Thyroid gland (tissue), 4 donors: ENCODE measurements at regions of chr17 and their contacts with region 1.

Region 1: GRCh38 chr17:8745586-8746500 is 1.2 kb upstream of the CCDC42 start:
- DNase-seq: peak; percentile 57 to 61
- H3K4me3 ChIP-seq: peak overlapping the region in 2 of 3 donors; percentile 23 to 47
- H3K27ac ChIP-seq: peak overlapping the region in 1 of 3 donors; percentile 31
- H3K4me1 ChIP-seq: peaks cover 5 to 6% of the 10 kb centered on the region in 2 donors
- H3K27me3 ChIP-seq: no peaks in the 10 kb centered on the region
- CTCF ChIP-seq: peak; percentile 58 to 96 (median 86)
- POLR2A ChIP-seq: no peak

Region 2: GRCh38 chr17:8409966-8410864 is 335.6 kb before region 1 on chr17:
- intact Hi-C with region 1: loop called (anchors 5 kb)
- DNase-seq: peak; percentile 86 to 91
- H3K4me3 ChIP-seq: no peak overlapping the region
- H3K27ac ChIP-seq: no peak overlapping the region
- H3K4me1 ChIP-seq: peaks cover 6 to 11% of the 10 kb centered on the region in 2 donors
- H3K27me3 ChIP-seq: no peaks in the 10 kb centered on the region
- CTCF ChIP-seq: peak; percentile 73 to 87 (median 82)
- POLR2A ChIP-seq: no peak

Region 3: GRCh38 chr17:8572764-8573163 is 173.1 kb before region 1 on chr17:
- intact Hi-C with region 1: loop called (anchors 10 kb)
- DNase-seq: no peak
- H3K4me3 ChIP-seq: no peak overlapping the region
- H3K27ac ChIP-seq: no peak overlapping the region
- H3K4me1 ChIP-seq: no peaks in the 10 kb centered on the region
- H3K27me3 ChIP-seq: no peaks in the 10 kb centered on the region
- CTCF ChIP-seq: peak in 3 of 6 experiments; percentile 26 to 36 (median 35)
- POLR2A ChIP-seq: no peak

Region 4: GRCh38 chr17:8673612-8674011 is 72.2 kb before region 1 on chr17:
- intact Hi-C with region 1: no loop called
- DNase-seq: no peak
- H3K4me3 ChIP-seq: no peak overlapping the region
- H3K27ac ChIP-seq: no peak overlapping the region
- H3K4me1 ChIP-seq: no peaks in the 10 kb centered on the region
- H3K27me3 ChIP-seq: no peaks in the 10 kb centered on the region
- CTCF ChIP-seq: no peak
- POLR2A ChIP-seq: no peak